OCI-LY7 (cell line): ENCODE measurements at regions of chr16 and their contacts with region 1.

Region 1: DNA sequence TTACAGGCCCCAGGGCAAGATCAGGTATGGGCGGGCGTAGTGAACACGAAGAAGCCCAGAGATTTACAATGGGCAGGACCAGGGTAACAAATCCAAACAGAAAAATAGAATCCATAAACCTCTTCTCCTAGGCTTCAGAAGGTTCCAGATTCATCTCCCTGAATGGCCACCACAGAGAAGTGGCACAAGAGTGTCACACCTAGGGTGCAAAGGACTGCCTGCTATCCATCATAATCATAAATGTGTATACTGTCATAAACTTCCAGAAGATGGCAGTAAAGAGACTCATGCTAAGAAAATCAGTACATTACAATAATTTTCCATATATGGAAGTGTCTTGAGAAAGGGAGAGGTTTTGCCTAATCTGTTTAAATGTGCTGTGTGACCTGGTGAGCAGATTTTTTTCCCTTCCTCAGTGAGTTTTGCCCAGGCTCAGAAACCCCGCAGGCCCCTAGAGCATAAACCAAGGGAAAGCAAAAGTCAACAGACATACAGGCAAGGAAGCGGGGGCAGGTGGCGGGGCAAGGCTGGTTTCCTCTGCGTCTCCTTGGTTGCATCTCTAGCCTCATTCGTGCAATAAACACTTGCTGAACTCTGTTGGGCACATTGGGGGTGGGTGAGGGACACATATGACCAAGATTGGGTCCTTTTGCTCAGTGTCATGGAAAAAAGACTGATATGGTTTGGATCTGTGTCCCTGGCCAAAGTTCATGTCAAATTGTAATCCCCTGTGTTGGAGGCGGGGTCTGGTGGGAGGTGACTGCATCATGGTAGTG is 92.0 kb upstream of the CDH5 start:
- DNase-seq: peak; percentile 31
- H3K4me3 ChIP-seq: no peak overlapping the region
- H3K27ac ChIP-seq: no peak overlapping the region
- H3K4me1 ChIP-seq: no peaks in the 10 kb centered on the region
- CTCF ChIP-seq: peak; percentile 72

Region 2: DNA sequence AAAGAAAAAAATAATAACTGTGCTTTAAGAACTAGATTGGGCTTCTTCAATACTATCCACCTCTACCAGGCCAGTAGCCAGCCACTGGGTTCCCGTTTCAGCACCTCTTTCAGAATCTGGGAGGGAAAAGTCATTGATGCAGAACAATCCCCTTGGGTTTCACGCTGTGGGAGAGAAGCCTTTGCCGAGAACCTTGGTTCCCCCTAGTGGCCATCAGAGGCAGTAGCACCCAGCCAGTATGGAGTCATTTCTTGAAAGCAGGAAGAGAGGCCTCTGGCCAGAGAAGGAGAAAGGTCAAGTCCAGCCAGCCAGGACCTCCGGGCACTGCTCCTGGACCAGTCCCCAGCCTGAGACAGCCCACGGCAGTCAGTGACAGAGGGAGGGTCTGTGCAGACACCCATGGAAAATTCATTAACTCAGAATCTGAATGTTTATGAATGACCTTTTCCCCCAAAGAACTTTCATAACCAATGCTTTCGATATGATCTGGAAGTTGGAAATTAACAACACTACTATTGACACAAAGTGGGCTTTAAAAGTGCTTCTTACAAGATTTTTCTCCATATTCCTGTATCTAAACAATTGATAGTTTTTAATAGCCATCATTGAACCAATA is 40.8 kb after region 1 on chr16:
- CTCF ChIA-PET with region 1: no interaction called
- POLR2A ChIA-PET with region 1: no interaction called
- intact Hi-C with region 1: loop called (anchors 1 kb)
- DNase-seq: peak; percentile 72
- H3K4me3 ChIP-seq: no peak overlapping the region
- H3K27ac ChIP-seq: no peak overlapping the region
- H3K4me1 ChIP-seq: no peaks in the 10 kb centered on the region
- CTCF ChIP-seq: peak; percentile 98